B cell (primary cell): ENCODE measurements at regions of chr6 and their contacts with region 1.

Region 1: DNA sequence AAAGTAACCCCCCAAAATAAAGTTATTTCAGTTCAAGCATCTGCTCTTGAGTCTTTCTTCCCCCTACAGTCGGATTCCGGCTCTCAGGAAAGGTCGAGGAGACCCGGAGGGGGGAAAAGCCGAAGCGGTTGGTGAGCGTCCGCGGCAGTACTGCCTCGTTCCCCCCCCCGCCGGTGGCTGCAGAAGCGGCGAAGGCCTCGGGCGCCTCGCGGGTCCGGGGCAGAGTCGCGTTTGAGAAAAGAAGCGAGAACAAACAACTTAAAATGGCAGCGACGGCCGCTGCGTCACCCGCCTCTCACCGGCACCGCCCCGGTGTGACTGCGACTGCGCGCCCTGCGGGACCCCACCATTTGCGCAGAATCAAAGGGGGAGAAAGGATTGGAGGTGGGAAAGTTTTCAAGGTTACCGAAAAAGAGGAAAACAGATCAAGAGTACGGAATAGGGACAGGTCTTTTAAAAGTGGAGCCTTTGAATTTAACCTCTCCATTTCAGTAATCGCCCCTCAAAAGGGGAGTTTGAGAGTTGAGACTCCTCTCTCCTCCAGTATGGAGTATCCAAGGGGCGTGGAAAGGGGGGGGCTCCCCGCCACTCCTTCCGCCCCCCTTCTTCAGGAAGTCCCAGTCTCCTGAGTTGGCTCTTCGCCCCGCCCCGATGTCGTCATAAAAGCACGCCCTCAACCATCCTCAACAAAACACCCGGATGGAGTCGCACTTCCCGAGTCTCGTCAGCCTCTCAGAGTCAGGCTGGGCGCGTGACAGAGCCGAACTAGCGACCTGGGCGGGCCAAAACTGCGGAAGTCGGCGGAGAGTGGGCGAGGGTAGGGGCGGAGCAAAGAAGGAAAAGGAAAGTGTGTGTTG is 1.9 kb upstream of the C6orf62 start:
- DNase-seq: peak; percentile 100
- ATAC-seq: peak; percentile 80
- H3K4me3 ChIP-seq: peak overlapping the region; percentile 87 to 99 (median 88)
- H3K4me3 Mint-ChIP-seq: peak overlapping the region; percentile 89
- H3K27ac ChIP-seq: peak overlapping the region; percentile 99
- H3K27ac Mint-ChIP-seq: peak overlapping the region; percentile 100
- H3K4me1 ChIP-seq: peaks cover 40 to 41% of the 10 kb centered on the region in 2 donors
- H3K4me1 Mint-ChIP-seq: peaks cover 46% of the 10 kb centered on the region
- H3K27me3 ChIP-seq: no peaks in the 10 kb centered on the region
- H3K27me3 Mint-ChIP-seq: no peaks in the 10 kb centered on the region
- CTCF ChIP-seq: no peak

Region 2: DNA sequence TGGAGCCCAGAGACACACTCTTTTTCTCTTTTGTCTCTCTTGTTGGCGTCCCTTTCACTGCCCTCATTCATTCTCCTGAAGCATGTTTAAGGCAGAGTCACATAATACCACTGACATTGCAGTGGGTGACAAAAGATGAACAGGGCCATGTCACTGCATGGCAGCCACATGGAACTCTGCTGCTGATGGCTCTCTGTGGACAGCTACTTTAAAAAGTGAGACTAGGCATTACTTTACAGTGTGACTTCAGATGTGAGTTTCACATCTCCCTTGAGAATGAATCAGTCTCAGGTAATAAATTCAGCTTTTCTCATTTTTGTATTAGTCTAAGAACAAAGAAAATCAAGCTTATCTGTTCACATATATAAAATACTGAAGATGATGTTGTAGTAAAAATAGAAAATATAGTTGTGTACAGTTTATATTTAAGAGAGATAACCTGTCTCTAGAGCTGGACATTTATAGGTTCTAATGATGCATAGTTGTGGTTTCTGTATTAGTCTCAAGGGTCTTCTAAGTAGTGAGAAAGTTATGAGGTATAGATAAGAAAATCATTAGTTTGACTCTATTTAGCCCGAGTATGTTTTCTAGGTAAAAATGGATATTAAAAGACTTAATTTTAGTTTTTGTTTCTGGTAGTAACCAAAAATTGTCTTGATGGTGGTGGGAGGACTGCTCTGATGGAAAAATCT is 312.0 kb before region 1 on chr6:
- CTCF ChIA-PET with region 1: no interaction called
- POLR2A ChIA-PET with region 1: interaction called, 12 read pairs
- intact Hi-C with region 1: no loop called
- DNase-seq: no peak
- ATAC-seq: no peak
- H3K4me3 ChIP-seq: no peak overlapping the region
- H3K4me3 Mint-ChIP-seq: no peak overlapping the region
- H3K27ac ChIP-seq: no peak overlapping the region
- H3K27ac Mint-ChIP-seq: no peak overlapping the region
- H3K4me1 ChIP-seq: peaks cover 3 to 5% of the 10 kb centered on the region in 2 donors
- H3K4me1 Mint-ChIP-seq: peaks cover 15% of the 10 kb centered on the region
- H3K27me3 ChIP-seq: no peaks in the 10 kb centered on the region
- H3K27me3 Mint-ChIP-seq: no peaks in the 10 kb centered on the region
- CTCF ChIP-seq: no peak

Region 3: DNA sequence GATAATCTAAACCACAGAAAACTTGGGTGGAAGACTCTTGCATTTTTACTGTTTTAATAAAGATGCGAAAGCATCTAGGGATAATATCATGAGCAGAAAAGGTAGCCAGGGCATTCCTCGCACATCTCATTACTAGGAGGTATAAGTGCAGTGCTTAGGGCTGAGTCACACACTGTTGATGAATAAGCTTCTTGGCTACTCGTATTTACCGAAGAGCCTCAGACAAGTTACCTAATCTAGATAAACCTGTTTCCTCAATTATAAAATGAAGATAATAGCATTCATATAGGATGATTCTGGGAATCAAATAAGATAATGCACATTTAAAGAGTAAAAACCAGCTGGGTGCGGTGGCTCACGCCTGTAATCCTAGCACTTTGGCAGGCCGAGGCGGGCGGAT is 74.0 kb before region 1 on chr6:
- CTCF ChIA-PET with region 1: no interaction called
- POLR2A ChIA-PET with region 1: interaction called, 4 read pairs
- intact Hi-C with region 1: loop called (anchors 1 kb)
- DNase-seq: no peak
- ATAC-seq: no peak
- H3K4me3 ChIP-seq: no peak overlapping the region
- H3K4me3 Mint-ChIP-seq: peak overlapping the region; percentile 95
- H3K27ac ChIP-seq: peak overlapping the region in 1 of 2 donors; percentile 75
- H3K27ac Mint-ChIP-seq: peak overlapping the region; percentile 98
- H3K4me1 ChIP-seq: peaks cover 10 to 15% of the 10 kb centered on the region in 2 donors
- H3K4me1 Mint-ChIP-seq: peaks cover 27% of the 10 kb centered on the region
- H3K27me3 ChIP-seq: no peaks in the 10 kb centered on the region
- H3K27me3 Mint-ChIP-seq: no peaks in the 10 kb centered on the region
- CTCF ChIP-seq: no peak

Region 4: DNA sequence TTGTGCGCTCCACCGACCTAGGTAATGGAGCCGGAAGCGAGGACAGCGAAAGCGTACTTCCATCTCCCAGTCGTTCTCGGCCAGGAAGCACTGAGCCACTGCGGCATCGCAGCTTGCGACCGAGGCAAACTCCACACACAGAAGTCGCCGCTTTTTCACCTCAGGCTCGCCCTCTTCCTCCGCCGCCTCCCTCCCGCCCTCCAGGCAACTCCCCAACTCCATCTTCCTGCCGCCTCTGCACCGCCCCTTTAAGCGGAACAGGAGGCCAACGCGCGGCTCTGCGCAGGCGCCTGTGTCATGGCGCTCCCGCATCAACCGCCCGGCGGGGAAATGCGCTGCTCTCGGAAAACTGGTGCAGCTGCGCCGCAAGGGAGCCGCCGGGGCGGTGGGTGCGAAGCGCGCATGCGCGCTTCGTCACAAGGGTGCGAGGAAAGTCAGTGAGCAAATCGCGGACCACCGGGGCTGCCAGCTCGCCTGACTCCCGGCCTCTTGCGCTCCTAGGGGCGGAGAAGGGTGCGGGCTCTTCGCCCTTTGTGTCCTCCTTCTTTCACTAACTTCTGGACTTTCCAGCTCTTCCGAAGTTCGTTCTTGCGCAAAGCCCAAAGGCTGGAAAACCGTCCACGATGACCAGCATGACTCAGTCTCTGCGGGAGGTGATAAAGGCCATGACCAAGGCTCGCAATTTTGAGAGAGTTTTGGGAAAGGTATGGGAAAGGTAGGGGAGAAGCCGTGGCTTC is 54.0 kb before region 1 on chr6 and contains the starts of genes ACOT13 and TDP2:
- CTCF ChIA-PET with region 1: no interaction called
- POLR2A ChIA-PET with region 1: interaction called, 3 read pairs
- intact Hi-C with region 1: loop called (anchors 1 kb)
- DNase-seq: peak; percentile 98
- ATAC-seq: peak; percentile 94
- H3K4me3 ChIP-seq: peak within 1 kb of the TSS; percentile 74 to 100 (median 96)
- H3K4me3 Mint-ChIP-seq: peak within 1 kb of the TSS; percentile 99
- H3K27ac ChIP-seq: peak within 1 kb of the TSS; percentile 75 to 82
- H3K27ac Mint-ChIP-seq: peak within 1 kb of the TSS; percentile 98
- H3K4me1 ChIP-seq: peaks cover 22 to 23% of the 10 kb centered on the region in 2 donors
- H3K4me1 Mint-ChIP-seq: peaks cover 46% of the 10 kb centered on the region
- H3K27me3 ChIP-seq: no peaks in the 10 kb centered on the region
- H3K27me3 Mint-ChIP-seq: no peaks in the 10 kb centered on the region
- CTCF ChIP-seq: peak; percentile 67
- total RNA-seq, gene ACOT13: 5.7 and 6.6 TPM in 2 replicates
- total RNA-seq, gene TDP2: 63.5 and 68.1 TPM in 2 replicates

Region 5: GRCh38 chr6:24699521-24700359 is 21.1 kb before region 1 on chr6:
- CTCF ChIA-PET with region 1: no interaction called
- POLR2A ChIA-PET with region 1: interaction called, 12 read pairs
- intact Hi-C with region 1: no loop called
- DNase-seq: no peak
- ATAC-seq: no peak
- H3K4me3 ChIP-seq: no peak overlapping the region
- H3K4me3 Mint-ChIP-seq: no peak overlapping the region
- H3K27ac ChIP-seq: peak overlapping the region in 1 of 2 donors; percentile 56
- H3K27ac Mint-ChIP-seq: peak overlapping the region; percentile 53
- H3K4me1 ChIP-seq: no peaks in the 10 kb centered on the region
- H3K4me1 Mint-ChIP-seq: peaks cover 25% of the 10 kb centered on the region
- H3K27me3 ChIP-seq: no peaks in the 10 kb centered on the region
- H3K27me3 Mint-ChIP-seq: no peaks in the 10 kb centered on the region
- CTCF ChIP-seq: no peak

Region 6: DNA sequence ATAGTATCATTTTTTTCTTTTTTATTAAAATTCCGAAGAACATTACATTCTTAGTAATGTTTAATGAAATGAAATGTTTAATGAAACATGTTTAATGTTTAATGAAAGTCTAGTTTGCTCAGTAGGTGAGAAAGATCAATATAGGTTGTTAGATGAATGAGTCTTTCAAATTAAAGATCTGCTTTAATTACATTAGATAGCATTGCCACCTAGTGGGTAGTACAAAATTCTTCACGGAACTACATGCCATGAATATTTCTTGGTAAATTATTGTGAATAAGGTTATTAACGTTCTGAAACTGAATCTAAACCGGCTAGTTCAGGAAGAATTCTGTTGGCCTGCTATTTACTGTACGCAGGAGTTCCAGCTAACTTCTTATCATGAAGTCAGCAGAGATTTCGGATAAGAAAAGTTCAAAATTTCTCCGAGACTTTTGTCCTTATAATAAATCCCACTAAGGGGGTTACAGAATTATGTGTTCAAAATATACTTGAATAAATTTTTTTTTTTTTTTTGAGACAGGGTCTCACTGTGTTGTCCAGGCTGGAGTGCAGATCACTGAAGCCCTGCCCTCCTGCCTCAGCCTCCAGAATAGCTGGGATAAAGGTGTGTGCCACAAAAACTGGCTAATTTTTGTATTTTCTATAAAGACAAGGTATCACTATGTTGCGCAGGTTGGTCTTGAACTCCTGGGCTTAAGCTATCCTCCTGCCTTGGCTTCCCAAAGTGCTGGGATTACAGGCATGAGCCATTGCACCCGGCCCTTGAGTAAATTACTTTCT is 46.0 kb after region 1 on chr6:
- CTCF ChIA-PET with region 1: interaction called, 3 read pairs
- POLR2A ChIA-PET with region 1: no interaction called
- intact Hi-C with region 1: loop called (anchors 2 kb)
- DNase-seq: peak; percentile 61
- ATAC-seq: peak; percentile 41
- H3K4me3 ChIP-seq: no peak overlapping the region
- H3K4me3 Mint-ChIP-seq: no peak overlapping the region
- H3K27ac ChIP-seq: no peak overlapping the region
- H3K27ac Mint-ChIP-seq: no peak overlapping the region
- H3K4me1 ChIP-seq: no peaks in the 10 kb centered on the region
- H3K4me1 Mint-ChIP-seq: peaks cover 1% of the 10 kb centered on the region
- H3K27me3 ChIP-seq: no peaks in the 10 kb centered on the region
- H3K27me3 Mint-ChIP-seq: no peaks in the 10 kb centered on the region
- CTCF ChIP-seq: peak; percentile 73

Region 7: GRCh38 chr6:24774696-24775519 is 54.1 kb after region 1 on chr6 and contains the start of gene GMNN:
- CTCF ChIA-PET with region 1: interaction called, 6 read pairs
- POLR2A ChIA-PET with region 1: interaction called, 6 read pairs
- intact Hi-C with region 1: loop called (anchors 1 kb)
- DNase-seq: peak; percentile 98
- ATAC-seq: peak; percentile 90
- H3K4me3 ChIP-seq: peak within 1 kb of the TSS; percentile 93 to 100 (median 95)
- H3K4me3 Mint-ChIP-seq: peak within 1 kb of the TSS; percentile 99
- H3K27ac ChIP-seq: peak within 1 kb of the TSS; percentile 85 to 94
- H3K27ac Mint-ChIP-seq: peak within 1 kb of the TSS; percentile 97
- H3K4me1 ChIP-seq: peaks cover 14 to 21% of the 10 kb centered on the region in 2 donors
- H3K4me1 Mint-ChIP-seq: peaks cover 26% of the 10 kb centered on the region
- H3K27me3 ChIP-seq: no peaks in the 10 kb centered on the region
- H3K27me3 Mint-ChIP-seq: no peaks in the 10 kb centered on the region
- CTCF ChIP-seq: no peak
- total RNA-seq, gene GMNN: 7.3 and 8.2 TPM in 2 replicates